Upper lobe of right lung (tissue), 1 donor: ENCODE measurements at regions of chr2 and their contacts with region 1.

Region 1: GRCh38 chr2:70616168-70616694 is 62.6 kb upstream of the TGFA start:
- DNase-seq: no peak
- ATAC-seq: peak; percentile 63
- H3K4me3 ChIP-seq: no peak overlapping the region
- H3K27ac ChIP-seq: no peak overlapping the region
- H3K4me1 ChIP-seq: no peaks in the 10 kb centered on the region
- H3K27me3 ChIP-seq: no peaks in the 10 kb centered on the region
- CTCF ChIP-seq: no peak

Region 2: GRCh38 chr2:70014959-70015358 is 601.3 kb before region 1 on chr2:
- intact Hi-C with region 1: no loop called
- DNase-seq: no peak
- ATAC-seq: no peak
- H3K4me3 ChIP-seq: no peak overlapping the region
- H3K27ac ChIP-seq: no peak overlapping the region
- H3K4me1 ChIP-seq: peaks cover 9% of the 10 kb centered on the region
- H3K27me3 ChIP-seq: no peaks in the 10 kb centered on the region
- CTCF ChIP-seq: no peak

Region 3: GRCh38 chr2:70340921-70341765 is 275.1 kb before region 1 on chr2:
- intact Hi-C with region 1: loop called (anchors 10 kb)
- DNase-seq: no peak
- ATAC-seq: peak; percentile 92
- H3K4me3 ChIP-seq: no peak overlapping the region
- H3K27ac ChIP-seq: no peak overlapping the region
- H3K4me1 ChIP-seq: no peaks in the 10 kb centered on the region
- H3K27me3 ChIP-seq: no peaks in the 10 kb centered on the region
- CTCF ChIP-seq: peak; percentile 79

Region 4: GRCh38 chr2:70557171-70557838 is 58.9 kb before region 1 on chr2:
- intact Hi-C with region 1: no loop called
- DNase-seq: no peak
- ATAC-seq: peak; percentile 27
- H3K4me3 ChIP-seq: no peak overlapping the region
- H3K27ac ChIP-seq: no peak overlapping the region
- H3K4me1 ChIP-seq: peaks cover 14% of the 10 kb centered on the region
- H3K27me3 ChIP-seq: peaks cover 17% of the 10 kb centered on the region
- CTCF ChIP-seq: no peak